ENCODE measurements at regions of chr11 and their contacts with region 1.

Region 1: DNA sequence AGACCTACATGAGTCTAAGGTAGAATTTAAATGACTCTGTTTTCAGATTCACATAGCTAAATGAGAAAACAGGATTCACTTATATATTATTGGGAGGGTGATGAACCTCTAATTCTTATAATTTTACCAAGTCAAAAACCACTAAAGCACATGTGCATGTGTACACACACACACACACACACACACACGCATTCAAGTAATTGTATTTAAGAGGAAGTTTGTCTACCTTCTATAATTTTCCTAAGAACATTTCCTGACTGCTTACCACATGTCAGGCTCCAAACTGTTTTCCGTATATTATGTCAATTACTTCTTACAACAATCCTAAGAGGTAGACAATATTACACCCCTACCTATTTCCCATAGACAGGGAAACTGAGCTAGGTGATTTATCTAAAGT is 6.7 kb downstream of the RNF141 start:
- DNase-seq: no peak
- ATAC-seq: no peak
- H3K4me3 ChIP-seq: no peak overlapping the region
- H3K27ac ChIP-seq: no peak overlapping the region
- H3K4me1 ChIP-seq: peaks cover 0 to 10% (median under 1%) of the 10 kb centered on the region in 9 donors
- H3K27me3 ChIP-seq: no peaks in the 10 kb centered on the region
- CTCF ChIP-seq: no peak

Region 2: GRCh38 chr11:10192036-10192435 is 342.3 kb before region 1 on chr11:
- intact Hi-C with region 1: no loop called
- DNase-seq: no peak
- ATAC-seq: no peak
- H3K4me3 ChIP-seq: no peak overlapping the region
- H3K27ac ChIP-seq: no peak overlapping the region
- H3K4me1 ChIP-seq: no peaks in the 10 kb centered on the region
- H3K27me3 ChIP-seq: no peaks in the 10 kb centered on the region
- CTCF ChIP-seq: no peak

Region 3: GRCh38 chr11:10478574-10479550 is 55.5 kb before region 1 on chr11:
- intact Hi-C with region 1: loop called in 1 of 10 experiments (anchors 10 kb)
- DNase-seq: no peak
- ATAC-seq: peak in 1 of 8 donors; percentile 19
- H3K4me3 ChIP-seq: no peak overlapping the region
- H3K27ac ChIP-seq: no peak overlapping the region
- H3K4me1 ChIP-seq: peaks cover 0 to 6% (median 0%) of the 10 kb centered on the region in 9 donors
- H3K27me3 ChIP-seq: no peaks in the 10 kb centered on the region
- CTCF ChIP-seq: no peak

Region 4: DNA sequence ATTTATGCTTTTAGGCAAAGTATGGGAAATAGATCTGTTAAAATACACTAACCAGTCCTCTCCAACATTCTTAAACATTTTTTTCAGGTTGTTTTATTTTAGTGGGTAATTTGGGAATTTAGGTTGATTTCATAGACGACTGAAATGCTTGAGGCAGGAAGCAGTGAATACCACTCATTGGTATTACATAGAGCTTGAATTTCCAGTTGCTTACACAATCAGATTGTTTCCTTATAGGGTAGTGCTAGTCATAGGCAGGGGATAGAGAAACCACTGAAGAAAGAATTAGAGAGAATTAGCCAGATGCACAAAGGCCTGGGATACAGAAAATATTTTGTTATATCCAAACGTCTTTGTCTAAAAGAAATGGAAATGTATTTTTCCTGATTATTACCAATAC is 58.0 kb after region 1 on chr11:
- intact Hi-C with region 1: no loop called
- DNase-seq: no peak
- ATAC-seq: peak in 4 of 8 donors; percentile 41 to 73 (median 58)
- H3K4me3 ChIP-seq: no peak overlapping the region
- H3K27ac ChIP-seq: peak overlapping the region in 1 of 10 donors; percentile 54
- H3K4me1 ChIP-seq: peaks cover 0 to 46% (median 4%) of the 10 kb centered on the region in 9 donors
- H3K27me3 ChIP-seq: no peaks in the 10 kb centered on the region
- CTCF ChIP-seq: no peak